ENCODE measurements at regions of chr13 and their contacts with region 1.

Region 1: DNA sequence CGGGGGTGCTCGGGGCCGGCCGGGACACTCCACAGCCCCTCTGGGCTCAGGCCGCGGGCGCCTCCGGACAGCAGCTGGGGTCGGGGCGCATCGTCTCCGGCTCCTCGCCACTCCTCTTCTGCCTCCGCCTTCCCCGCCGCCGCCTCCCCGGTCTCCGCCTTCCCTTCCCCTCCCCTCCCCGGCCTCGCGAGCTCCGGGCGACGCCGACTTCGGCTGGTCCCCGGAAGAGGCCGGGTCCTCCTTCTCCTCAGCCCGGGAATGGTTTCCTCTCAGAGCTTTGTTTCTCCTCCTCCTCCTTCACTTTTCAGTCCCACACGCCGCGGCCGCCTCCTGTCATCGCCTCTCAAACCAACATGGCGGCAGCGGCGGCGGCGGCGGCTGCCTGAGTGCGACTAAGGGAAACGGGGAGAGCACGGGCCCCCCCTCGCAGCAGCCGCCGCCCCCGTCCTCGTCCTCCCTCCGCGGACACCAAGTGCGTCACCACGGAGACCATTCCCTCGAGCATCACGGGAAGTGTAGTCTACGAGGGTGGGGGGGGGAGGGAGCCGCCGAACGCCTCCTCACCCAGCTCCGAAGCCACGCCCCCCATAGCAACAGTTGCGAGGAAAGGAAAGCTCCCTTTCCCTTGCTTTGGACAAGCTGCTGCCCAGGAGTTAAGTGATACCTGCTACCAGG is at the start of gene UBL3:
- DNase-seq: peak; percentile 90
- H3K4me3 Mint-ChIP-seq: peak within 1 kb of the TSS; percentile 96
- H3K27ac Mint-ChIP-seq: peak within 1 kb of the TSS; percentile 99
- H3K4me1 Mint-ChIP-seq: peaks cover 44% of the 10 kb centered on the region
- H3K27me3 Mint-ChIP-seq: no peaks in the 10 kb centered on the region
- total RNA-seq, gene UBL3: 7.9 and 8.5 TPM in 2 replicates

Region 2: DNA sequence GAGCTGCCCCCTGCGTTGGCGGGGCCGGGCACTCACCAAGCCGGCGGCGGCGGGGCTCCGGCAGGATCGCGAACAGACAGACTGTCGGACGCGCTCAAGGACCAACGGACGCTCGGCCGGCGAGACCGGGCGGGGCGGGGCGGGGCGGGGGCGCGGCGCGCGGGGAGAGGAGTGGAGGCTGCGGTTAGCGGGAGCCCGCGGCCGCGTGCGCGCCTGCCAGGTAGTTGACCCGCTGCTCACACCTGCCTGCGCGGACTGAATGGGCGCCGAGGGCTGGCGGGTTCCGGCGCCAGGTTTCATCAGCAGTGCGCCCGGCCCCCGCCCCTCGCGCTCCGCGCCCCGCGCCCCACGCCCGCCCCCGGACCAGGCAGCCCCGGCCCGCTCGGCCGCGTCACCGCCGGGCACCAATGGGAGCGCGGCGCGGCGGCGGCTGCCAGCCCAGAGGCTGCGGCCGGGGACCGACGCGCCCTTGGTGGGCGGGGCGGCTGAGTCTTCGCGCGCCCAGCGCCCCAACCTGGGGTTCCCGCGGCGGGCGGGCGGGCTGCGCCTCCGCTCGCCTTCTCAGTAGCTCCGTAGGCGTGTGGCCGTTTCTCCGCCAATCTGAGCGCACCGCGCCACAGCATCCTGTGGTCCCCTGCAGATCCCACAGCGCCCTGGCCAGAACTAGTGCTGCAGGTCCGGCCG is 254.8 kb before region 1 on chr13 and contains the start of gene SLC7A1:
- intact Hi-C with region 1: loop called (anchors 1 kb)
- DNase-seq: peak; percentile 85
- H3K4me3 Mint-ChIP-seq: peak within 1 kb of the TSS; percentile 90
- H3K27ac Mint-ChIP-seq: peak within 1 kb of the TSS; percentile 95
- H3K4me1 Mint-ChIP-seq: peaks cover 39% of the 10 kb centered on the region
- H3K27me3 Mint-ChIP-seq: peaks cover 2% of the 10 kb centered on the region
- total RNA-seq, gene SLC7A1: 111 and 114 TPM in 2 replicates

Region 3: GRCh38 chr13:29817604-29818378 is 32.6 kb before region 1 on chr13:
- intact Hi-C with region 1: loop called (anchors 2 kb)
- DNase-seq: no peak
- H3K4me3 Mint-ChIP-seq: peak overlapping the region; percentile 10
- H3K27ac Mint-ChIP-seq: peak overlapping the region; percentile 55
- H3K4me1 Mint-ChIP-seq: peaks cover 32% of the 10 kb centered on the region
- H3K27me3 Mint-ChIP-seq: no peaks in the 10 kb centered on the region

Region 4: DNA sequence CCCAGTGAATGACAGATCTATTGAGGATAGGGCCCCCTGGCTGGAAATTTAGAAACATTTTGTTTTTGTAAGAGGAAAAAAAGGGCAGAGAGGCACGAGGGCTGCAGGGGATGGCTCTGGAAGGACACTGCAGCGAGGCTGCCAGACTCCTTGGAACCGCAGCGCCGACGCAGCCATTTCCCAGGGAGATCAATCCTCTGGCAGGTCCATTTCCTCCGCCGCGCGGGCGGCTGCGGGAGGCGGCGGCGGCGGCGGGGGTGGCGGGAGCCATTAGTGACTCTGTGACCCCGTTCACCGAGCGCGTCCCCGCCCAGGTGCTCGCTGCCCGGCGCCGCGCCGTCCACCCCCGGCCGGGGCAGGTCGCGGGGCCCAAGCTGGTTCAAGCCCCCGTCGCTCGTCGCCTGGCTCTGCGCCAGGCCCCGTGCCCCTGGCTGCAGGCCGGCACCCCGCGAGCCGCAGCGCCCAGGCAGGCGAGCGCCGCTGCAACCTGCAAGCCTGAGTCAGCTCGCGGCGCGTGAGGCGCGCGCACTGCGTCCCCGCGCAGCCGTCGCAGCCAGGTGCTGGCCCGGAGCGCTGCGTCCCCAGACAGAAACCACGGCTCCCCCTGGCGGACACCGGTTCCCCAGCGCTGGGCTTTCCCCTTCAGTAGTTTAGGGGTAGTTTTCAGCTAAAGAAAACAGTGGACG is 264.4 kb after region 1 on chr13:
- intact Hi-C with region 1: loop called (anchors 1 kb)
- DNase-seq: peak; percentile 86
- H3K4me3 Mint-ChIP-seq: peak overlapping the region; percentile 76
- H3K27ac Mint-ChIP-seq: peak overlapping the region; percentile 26
- H3K4me1 Mint-ChIP-seq: peaks cover 33% of the 10 kb centered on the region
- H3K27me3 Mint-ChIP-seq: peaks cover 4% of the 10 kb centered on the region

Region 5: DNA sequence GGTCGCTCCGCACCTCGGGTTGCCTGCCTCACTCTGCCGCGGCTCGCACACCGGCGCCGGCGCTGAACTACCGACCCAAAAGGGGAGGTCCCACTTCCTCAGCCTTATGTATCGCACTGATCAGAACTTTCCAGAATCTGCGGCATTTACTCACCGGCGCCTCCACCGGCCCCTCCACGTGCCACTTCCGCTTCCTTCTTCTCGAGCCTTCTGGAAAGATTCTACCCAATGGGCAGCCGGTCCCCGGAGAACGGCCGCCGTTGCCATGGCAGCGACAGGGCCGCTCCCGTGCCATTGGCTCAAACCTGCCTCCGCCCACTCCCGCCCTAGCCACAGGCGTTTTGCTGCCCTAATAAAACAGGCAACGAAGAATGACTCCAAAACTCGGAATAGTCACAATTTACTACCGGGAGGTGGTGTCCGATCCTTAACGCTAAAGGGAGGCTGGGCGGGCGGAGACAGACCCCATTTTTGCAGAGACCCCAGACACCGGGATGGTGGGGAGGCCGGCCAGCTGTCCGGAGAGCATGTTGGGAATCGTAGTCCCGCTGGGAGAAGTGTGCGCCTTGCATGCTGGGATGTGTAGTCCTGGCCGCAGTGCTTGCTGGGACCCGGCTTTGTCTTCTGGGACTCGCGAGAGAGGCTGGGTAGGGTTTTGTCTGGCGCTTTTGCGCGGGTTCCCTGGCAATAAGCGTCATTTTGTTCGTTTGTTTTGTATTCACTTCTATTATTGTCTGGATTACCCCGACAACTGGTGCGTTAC is 1311.6 kb after region 1 on chr13 and contains the start of gene HSPH1:
- intact Hi-C with region 1: loop called (anchors 10 kb)
- DNase-seq: peak; percentile 98
- H3K4me3 Mint-ChIP-seq: peak within 1 kb of the TSS; percentile 95
- H3K27ac Mint-ChIP-seq: peak within 1 kb of the TSS; percentile 97
- H3K4me1 Mint-ChIP-seq: peaks cover 41% of the 10 kb centered on the region
- H3K27me3 Mint-ChIP-seq: no peaks in the 10 kb centered on the region
- total RNA-seq, gene HSPH1: 269 and 274 TPM in 2 replicates